CD4-positive, alpha-beta T cell (primary cell): ENCODE measurements at regions of chr1 and their contacts with region 1.

Region 1: DNA sequence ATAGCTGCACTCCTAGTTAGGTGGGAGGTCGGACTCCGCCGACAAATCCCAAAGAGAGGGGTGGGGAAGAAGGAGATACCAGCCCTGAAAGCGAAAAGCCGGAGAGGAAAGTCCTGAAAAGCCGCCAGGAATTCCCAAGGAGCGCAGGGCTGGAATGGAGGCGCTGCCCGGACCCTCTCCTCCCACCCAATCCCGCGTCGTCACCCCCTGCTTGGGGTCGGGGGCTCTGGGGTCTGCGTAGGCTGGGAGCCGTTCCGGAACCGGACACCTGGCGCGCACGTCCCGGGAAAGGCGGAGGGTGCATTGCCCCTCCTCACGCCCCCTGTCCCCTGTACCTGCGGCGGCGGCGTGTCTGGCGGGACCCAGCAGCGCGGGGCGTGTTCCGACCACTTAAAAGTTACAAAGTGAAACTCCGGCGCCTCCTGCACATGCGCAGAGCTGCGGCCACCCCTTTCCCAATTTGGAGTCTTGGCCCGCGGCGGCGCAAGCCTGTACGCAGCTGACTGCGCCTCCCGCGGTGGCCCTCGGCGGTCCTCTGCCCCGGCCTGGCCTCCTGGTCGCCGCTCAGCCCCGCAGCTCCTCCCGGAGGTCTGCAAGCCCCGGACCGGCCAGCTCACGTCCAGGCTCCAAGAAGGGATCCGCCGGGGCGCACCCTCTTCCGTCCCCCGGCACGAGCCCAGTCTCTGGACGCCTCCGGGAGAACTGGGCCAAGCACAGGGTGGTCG is at the start of gene TMEM63A:
- DNase-seq: peak; percentile 85 to 95 (median 91)
- ATAC-seq: peak; percentile 64
- H3K4me3 ChIP-seq: peak within 1 kb of the TSS; percentile 74
- H3K4me3 Mint-ChIP-seq: peak within 1 kb of the TSS; percentile 97
- H3K27ac ChIP-seq: peak within 1 kb of the TSS; percentile 87 to 89
- H3K27ac Mint-ChIP-seq: peak within 1 kb of the TSS; percentile 86
- H3K4me1 ChIP-seq: peaks cover 56% of the 10 kb centered on the region
- H3K4me1 Mint-ChIP-seq: peaks cover 47% of the 10 kb centered on the region
- H3K27me3 ChIP-seq: no peaks in the 10 kb centered on the region
- H3K27me3 Mint-ChIP-seq: no peaks in the 10 kb centered on the region
- CTCF ChIP-seq: peak; percentile 33
- total RNA-seq, gene TMEM63A: 199 to 204 TPM

Region 2: DNA sequence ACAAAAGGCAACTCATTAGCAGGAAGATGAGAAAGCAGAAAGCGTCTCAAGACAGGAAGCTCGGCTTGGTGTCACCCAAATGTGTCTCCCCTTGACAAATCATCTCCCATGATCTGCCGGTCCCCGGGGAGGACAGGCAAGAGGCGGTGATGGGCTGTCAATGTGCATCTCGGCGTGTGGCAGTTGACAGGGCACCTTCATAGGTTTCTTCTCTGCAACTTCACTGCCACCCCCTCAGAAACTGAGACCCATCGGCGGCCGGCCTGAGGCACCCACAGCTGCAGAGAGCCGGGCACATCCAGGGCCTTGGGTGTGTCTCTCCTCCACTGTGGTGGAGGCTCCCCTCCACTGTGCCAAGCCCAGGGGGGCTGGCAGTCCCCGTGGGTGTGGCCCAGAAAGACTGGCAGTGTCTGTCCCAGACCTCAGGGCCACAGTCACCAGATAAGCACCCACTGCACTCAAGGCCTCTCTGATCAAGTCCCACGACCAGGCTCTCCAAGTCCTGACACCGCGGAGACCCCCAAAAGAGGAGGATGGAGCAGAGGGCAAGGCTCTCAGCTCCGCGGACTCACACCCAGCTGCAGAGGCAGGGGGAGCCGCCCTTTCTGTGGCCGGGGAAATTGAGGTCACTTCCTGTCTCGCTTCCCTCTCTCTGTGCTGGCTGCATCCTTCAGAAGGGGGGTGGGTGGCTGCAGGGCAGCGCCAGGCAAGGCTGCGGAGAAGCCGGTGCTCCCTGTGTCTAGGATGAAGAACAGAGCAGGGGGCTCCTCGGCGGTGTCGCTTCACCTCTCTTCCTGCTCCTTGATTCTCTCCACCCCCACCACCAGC is 414.7 kb before region 1 on chr1:
- CTCF ChIA-PET with region 1: no interaction called
- POLR2A ChIA-PET with region 1: interaction called, 11 read pairs
- intact Hi-C with region 1: no loop called
- DNase-seq: peak; percentile 67 to 94 (median 79)
- ATAC-seq: peak; percentile 85
- H3K4me3 ChIP-seq: peak overlapping the region; percentile 79
- H3K4me3 Mint-ChIP-seq: peak overlapping the region; percentile 96
- H3K27ac ChIP-seq: peak overlapping the region; percentile 92 to 94
- H3K27ac Mint-ChIP-seq: peak overlapping the region; percentile 99
- H3K4me1 ChIP-seq: peaks cover 56% of the 10 kb centered on the region
- H3K4me1 Mint-ChIP-seq: peaks cover 40% of the 10 kb centered on the region
- H3K27me3 ChIP-seq: no peaks in the 10 kb centered on the region
- H3K27me3 Mint-ChIP-seq: no peaks in the 10 kb centered on the region
- CTCF ChIP-seq: no peak

Region 3: GRCh38 chr1:225866061-225866837 is 15.9 kb before region 1 on chr1:
- CTCF ChIA-PET with region 1: interaction called, 5 read pairs
- POLR2A ChIA-PET with region 1: interaction called, 41 read pairs
- intact Hi-C with region 1: loop called in 1 of 2 experiments (anchors 2 kb)
- DNase-seq: peak; percentile 46 to 87 (median 71)
- ATAC-seq: peak; percentile 93
- H3K4me3 ChIP-seq: peak overlapping the region; percentile 10
- H3K4me3 Mint-ChIP-seq: peak overlapping the region; percentile 56
- H3K27ac ChIP-seq: peak overlapping the region; percentile 51 to 64
- H3K27ac Mint-ChIP-seq: peak overlapping the region; percentile 87
- H3K4me1 ChIP-seq: peaks cover 48% of the 10 kb centered on the region
- H3K4me1 Mint-ChIP-seq: peaks cover 52% of the 10 kb centered on the region
- H3K27me3 ChIP-seq: no peaks in the 10 kb centered on the region
- H3K27me3 Mint-ChIP-seq: no peaks in the 10 kb centered on the region
- CTCF ChIP-seq: no peak

Region 4: GRCh38 chr1:225896937-225897549 is 14.9 kb after region 1 on chr1:
- CTCF ChIA-PET with region 1: interaction called, 21 read pairs
- POLR2A ChIA-PET with region 1: interaction called, 427 read pairs
- intact Hi-C with region 1: loop called (anchors 1 kb)
- DNase-seq: peak; percentile 45 to 95 (median 60)
- ATAC-seq: peak; percentile 92
- H3K4me3 ChIP-seq: peak overlapping the region; percentile 26
- H3K4me3 Mint-ChIP-seq: peak overlapping the region; percentile 55
- H3K27ac ChIP-seq: peak overlapping the region; percentile 81 to 90
- H3K27ac Mint-ChIP-seq: peak overlapping the region; percentile 98
- H3K4me1 ChIP-seq: peaks cover 53% of the 10 kb centered on the region
- H3K4me1 Mint-ChIP-seq: peaks cover 60% of the 10 kb centered on the region
- H3K27me3 ChIP-seq: no peaks in the 10 kb centered on the region
- H3K27me3 Mint-ChIP-seq: no peaks in the 10 kb centered on the region
- CTCF ChIP-seq: no peak

Region 5: DNA sequence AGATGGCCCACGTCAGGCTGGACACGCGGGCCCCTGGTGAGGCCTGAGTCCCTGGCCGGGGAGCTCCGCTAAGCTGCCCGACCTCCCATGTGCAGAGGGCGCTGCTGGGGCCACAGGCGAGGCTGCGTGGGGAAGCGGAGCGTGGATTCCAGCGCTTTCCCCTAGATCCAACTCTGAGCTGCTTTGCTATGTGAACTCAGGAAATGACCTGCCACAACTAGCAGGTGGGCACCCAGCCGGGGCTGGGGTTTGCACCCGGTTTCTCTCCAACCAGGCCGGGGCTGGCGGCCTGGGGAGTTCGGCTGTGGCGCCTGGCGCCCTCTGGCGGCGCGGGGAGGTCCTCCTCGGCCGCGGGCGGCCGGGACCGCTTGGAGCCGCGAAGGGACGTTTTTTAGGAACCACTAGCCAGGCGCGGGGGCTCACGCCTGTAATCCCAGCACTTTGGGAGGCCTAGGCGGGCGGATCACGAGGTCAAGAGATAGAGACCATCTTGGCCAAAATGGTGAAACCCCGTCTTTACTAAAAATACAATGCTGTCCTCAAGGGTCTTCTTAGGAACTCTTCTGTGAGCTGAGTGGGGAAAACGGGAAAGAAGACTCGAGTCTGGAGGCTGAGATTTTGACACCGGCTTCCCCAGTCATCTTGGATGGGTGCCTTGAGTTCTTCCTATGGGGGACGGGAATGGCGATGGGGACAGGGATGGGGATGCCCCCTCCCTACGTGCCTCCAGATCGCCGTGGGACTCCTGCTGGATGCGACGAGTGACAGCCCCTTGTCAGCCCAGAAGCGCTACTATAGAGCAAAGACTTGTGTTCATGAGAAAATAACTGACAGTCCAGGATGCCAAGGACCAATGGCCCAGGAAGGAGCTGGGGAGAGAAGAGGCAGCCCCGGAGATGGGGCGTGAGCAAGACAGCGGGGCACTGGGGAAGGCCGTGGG is 29.3 kb after region 1 on chr1:
- CTCF ChIA-PET with region 1: interaction called, 10 read pairs
- POLR2A ChIA-PET with region 1: interaction called, 75 read pairs
- intact Hi-C with region 1: loop called (anchors 1 to 2 kb)
- DNase-seq: peak; percentile 52 to 88 (median 69)
- ATAC-seq: peak; percentile 95
- H3K4me3 ChIP-seq: no peak overlapping the region
- H3K4me3 Mint-ChIP-seq: no peak overlapping the region
- H3K27ac ChIP-seq: no peak overlapping the region
- H3K27ac Mint-ChIP-seq: no peak overlapping the region
- H3K4me1 ChIP-seq: peaks cover 28% of the 10 kb centered on the region
- H3K4me1 Mint-ChIP-seq: peaks cover 42% of the 10 kb centered on the region
- H3K27me3 ChIP-seq: no peaks in the 10 kb centered on the region
- H3K27me3 Mint-ChIP-seq: no peaks in the 10 kb centered on the region
- CTCF ChIP-seq: peak; percentile 97

Region 6: GRCh38 chr1:225977937-225978748 is 96.0 kb after region 1 on chr1:
- CTCF ChIA-PET with region 1: no interaction called
- POLR2A ChIA-PET with region 1: interaction called, 3 read pairs
- intact Hi-C with region 1: loop called (anchors 5 kb)
- DNase-seq: peak in 1 of 14 experiments; percentile 7
- ATAC-seq: no peak
- H3K4me3 ChIP-seq: no peak overlapping the region
- H3K4me3 Mint-ChIP-seq: no peak overlapping the region
- H3K27ac ChIP-seq: no peak overlapping the region
- H3K27ac Mint-ChIP-seq: no peak overlapping the region
- H3K4me1 ChIP-seq: peaks cover 5% of the 10 kb centered on the region
- H3K4me1 Mint-ChIP-seq: peaks cover 6% of the 10 kb centered on the region
- H3K27me3 ChIP-seq: no peaks in the 10 kb centered on the region
- H3K27me3 Mint-ChIP-seq: no peaks in the 10 kb centered on the region
- CTCF ChIP-seq: no peak